Calu3 (cell line): ENCODE measurements at regions of chr13 and their contacts with region 1.

Region 1: GRCh38 chr13:31742097-31742734 is 2.9 kb downstream of the RXFP2 start:
- DNase-seq: peak; percentile 64
- H3K4me3 Mint-ChIP-seq: peak overlapping the region; percentile 39
- H3K27ac Mint-ChIP-seq: peak overlapping the region; percentile 19
- H3K4me1 Mint-ChIP-seq: peaks cover 8% of the 10 kb centered on the region
- H3K27me3 Mint-ChIP-seq: peaks cover 28% of the 10 kb centered on the region
- CTCF ChIP-seq: peak; percentile 79

Region 2: DNA sequence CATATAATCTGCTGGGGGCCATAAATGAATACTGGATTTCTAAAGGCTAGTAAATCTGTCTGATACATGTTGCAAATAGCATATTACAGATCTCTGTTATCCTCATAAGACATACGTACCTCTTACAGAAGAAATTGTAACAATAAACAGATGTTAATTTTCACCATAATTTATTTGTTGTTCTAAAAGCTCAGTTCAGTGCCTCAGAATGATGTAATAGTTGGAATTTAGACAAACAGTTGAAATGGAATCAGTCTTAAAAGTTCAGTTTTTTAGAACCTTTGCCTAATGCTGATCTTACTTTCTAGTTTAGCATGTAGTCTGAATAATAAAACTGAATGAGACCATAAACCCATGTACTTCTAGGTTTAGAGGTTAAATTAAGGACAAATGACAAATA is 499.3 kb before region 1 on chr13:
- CTCF ChIA-PET with region 1: no interaction called
- intact Hi-C with region 1: loop called (anchors 10 kb)
- DNase-seq: no peak
- H3K4me3 Mint-ChIP-seq: no peak overlapping the region
- H3K27ac Mint-ChIP-seq: no peak overlapping the region
- H3K4me1 Mint-ChIP-seq: no peaks in the 10 kb centered on the region
- H3K27me3 Mint-ChIP-seq: no peaks in the 10 kb centered on the region
- CTCF ChIP-seq: no peak

Region 3: GRCh38 chr13:31538067-31539042 is 203.9 kb before region 1 on chr13:
- CTCF ChIA-PET with region 1: interaction called, 19 read pairs
- intact Hi-C with region 1: loop called (anchors 1 kb)
- DNase-seq: peak; percentile 4
- H3K4me3 Mint-ChIP-seq: no peak overlapping the region
- H3K27ac Mint-ChIP-seq: no peak overlapping the region
- H3K4me1 Mint-ChIP-seq: peaks cover 14% of the 10 kb centered on the region
- H3K27me3 Mint-ChIP-seq: no peaks in the 10 kb centered on the region
- CTCF ChIP-seq: peak; percentile 13